ENCODE measurements at regions of chr10 and their contacts with region 1.

Region 1: GRCh38 chr10:12902135-12902572 is 99.4 kb downstream of the CCDC3 start:
- DNase-seq: peak; percentile 64
- ATAC-seq: peak; percentile 75
- H3K4me3 ChIP-seq: no peak overlapping the region
- H3K27ac ChIP-seq: no peak overlapping the region
- H3K4me1 ChIP-seq: no peaks in the 10 kb centered on the region
- H3K27me3 ChIP-seq: peaks cover 4% of the 10 kb centered on the region; the same call in 1 of the 2 replicates
- CTCF ChIP-seq: peak; percentile 81
- POLR2A ChIP-seq: no peak
- RAD21 ChIP-seq: peak; percentile 81

Region 2: GRCh38 chr10:12214763-12215218 is 687.4 kb before region 1 on chr10:
- CTCF ChIA-PET with region 1: no interaction called
- POLR2A ChIA-PET with region 1: no interaction called
- dilution Hi-C with region 1: no loop called
- in situ Hi-C with region 1: no loop called
- intact Hi-C with region 1: loop called (anchors 5 kb)
- DNase-seq: peak; percentile 64
- ATAC-seq: peak; percentile 73
- H3K4me3 ChIP-seq: no peak overlapping the region
- H3K27ac ChIP-seq: peak overlapping the region; percentile 29; the same call in 1 of the 2 replicates
- H3K4me1 ChIP-seq: peaks cover 5% of the 10 kb centered on the region
- H3K27me3 ChIP-seq: no peaks in the 10 kb centered on the region
- CTCF ChIP-seq: peak; percentile 73
- POLR2A ChIP-seq: no peak
- RAD21 ChIP-seq: peak; percentile 66

Region 3: GRCh38 chr10:12729885-12730284 is 172.3 kb before region 1 on chr10:
- CTCF ChIA-PET with region 1: no interaction called
- POLR2A ChIA-PET with region 1: no interaction called
- dilution Hi-C with region 1: no loop called
- in situ Hi-C with region 1: no loop called
- intact Hi-C with region 1: loop called (anchors 5 kb)
- DNase-seq: no peak
- ATAC-seq: no peak
- H3K4me3 ChIP-seq: no peak overlapping the region
- H3K27ac ChIP-seq: no peak overlapping the region
- H3K4me1 ChIP-seq: peaks cover 1% of the 10 kb centered on the region; the same call in 1 of the 2 replicates
- H3K27me3 ChIP-seq: peaks cover 1% of the 10 kb centered on the region; the same call in 1 of the 2 replicates
- CTCF ChIP-seq: peak; percentile 12; the same call in 1 of the 2 replicates
- POLR2A ChIP-seq: no peak
- RAD21 ChIP-seq: peak; percentile 21; the same call in 1 of the 2 replicates

Region 4: GRCh38 chr10:12782537-12782936 is 119.6 kb before region 1 on chr10:
- CTCF ChIA-PET with region 1: interaction called, 5 read pairs
- POLR2A ChIA-PET with region 1: no interaction called
- dilution Hi-C with region 1: no loop called
- in situ Hi-C with region 1: no loop called
- intact Hi-C with region 1: loop called (anchors 1 kb)
- DNase-seq: peak; percentile 29
- ATAC-seq: no peak; the same call in 1 of the 2 replicates
- H3K4me3 ChIP-seq: no peak overlapping the region
- H3K27ac ChIP-seq: no peak overlapping the region
- H3K4me1 ChIP-seq: peaks cover 2% of the 10 kb centered on the region; the same call in 1 of the 2 replicates
- H3K27me3 ChIP-seq: no peaks in the 10 kb centered on the region; the same call in 1 of the 2 replicates
- CTCF ChIP-seq: peak; percentile 64
- POLR2A ChIP-seq: no peak
- RAD21 ChIP-seq: peak; percentile 53

Region 5: GRCh38 chr10:13074561-13075451 is 172.7 kb after region 1 on chr10:
- CTCF ChIA-PET with region 1: no interaction called
- POLR2A ChIA-PET with region 1: no interaction called
- dilution Hi-C with region 1: no loop called
- in situ Hi-C with region 1: no loop called
- intact Hi-C with region 1: loop called (anchors 2 kb)
- DNase-seq: peak; percentile 60
- ATAC-seq: peak; percentile 95
- H3K4me3 ChIP-seq: no peak overlapping the region
- H3K27ac ChIP-seq: no peak overlapping the region
- H3K4me1 ChIP-seq: no peaks in the 10 kb centered on the region
- H3K27me3 ChIP-seq: 0 out of 2 replicates have a peak, but pooled peaks cover 2% of the 10 kb centered on the region
- CTCF ChIP-seq: peak; percentile 87
- POLR2A ChIP-seq: no peak
- RAD21 ChIP-seq: peak; percentile 94